Heart left ventricle (tissue), 16 donors: ENCODE measurements at regions of chr13 and their contacts with region 1.

Region 1: GRCh38 chr13:36346222-36347083 is at the start of gene SPART:
- DNase-seq: peak; percentile 91 to 95 (median 94)
- ATAC-seq: peak; percentile 95 to 96 (median 96)
- H3K4me3 ChIP-seq: peak within 1 kb of the TSS; percentile 65 to 91 (median 81)
- H3K27ac ChIP-seq: peak within 1 kb of the TSS; percentile 95 to 99 (median 98)
- H3K4me1 ChIP-seq: peaks cover 0 to 38% (median 19%) of the 10 kb centered on the region in 12 donors
- H3K27me3 ChIP-seq: no peaks in the 10 kb centered on the region
- CTCF ChIP-seq: peak; percentile 95 to 99 (median 98)
- POLR2A ChIP-seq: peak in 1 of 2 donors; percentile 46
- total RNA-seq, gene SPART: 31.0 to 41.5 (median 34.7) TPM

Region 2: DNA sequence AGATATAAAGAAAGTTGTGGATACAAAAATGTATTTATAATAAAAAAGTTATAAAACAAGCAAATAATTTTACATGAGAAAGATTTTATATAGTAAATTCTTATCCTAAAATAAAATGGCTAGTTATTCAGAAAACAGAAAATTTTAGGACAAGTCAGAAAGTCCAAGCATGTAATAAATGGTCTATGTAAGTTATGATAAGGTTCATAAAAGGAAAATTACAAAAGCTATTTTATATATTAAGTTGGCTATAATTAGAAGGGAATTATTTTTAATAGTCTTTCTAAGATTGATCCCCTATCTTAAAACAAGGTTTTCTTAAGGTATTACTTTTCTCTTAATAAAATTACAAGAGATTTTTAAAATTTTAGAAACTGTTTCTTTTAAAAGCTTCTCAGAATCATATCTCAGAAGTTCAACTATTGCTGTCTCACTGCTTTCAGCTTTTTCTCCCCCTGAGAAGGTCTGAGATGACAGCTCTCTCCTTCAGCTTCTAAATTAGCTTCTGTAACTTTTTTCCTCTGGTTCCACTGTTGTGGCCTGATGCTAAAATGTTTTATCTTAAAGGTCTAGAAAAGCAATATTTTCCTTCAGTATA is 57.6 kb before region 1 on chr13:
- intact Hi-C with region 1: loop called in 1 of 10 experiments (anchors 5 kb)
- DNase-seq: no peak
- ATAC-seq: no peak
- H3K4me3 ChIP-seq: no peak overlapping the region
- H3K27ac ChIP-seq: no peak overlapping the region
- H3K4me1 ChIP-seq: no peaks in the 10 kb centered on the region
- H3K27me3 ChIP-seq: no peaks in the 10 kb centered on the region
- CTCF ChIP-seq: no peak
- POLR2A ChIP-seq: no peak

Region 3: GRCh38 chr13:36297366-36298338 is 48.8 kb before region 1 on chr13 and contains the start of gene CCDC169:
- intact Hi-C with region 1: loop called in 1 of 10 experiments (anchors 5 kb)
- DNase-seq: peak; percentile 61 to 87 (median 73)
- ATAC-seq: peak; percentile 50 to 95 (median 94)
- H3K4me3 ChIP-seq: peak within 1 kb of the TSS; percentile 24 to 72 (median 60)
- H3K27ac ChIP-seq: peak within 1 kb of the TSS in 8 of 12 donors; percentile 2 to 85 (median 30)
- H3K4me1 ChIP-seq: peaks cover 0 to 16% (median 8%) of the 10 kb centered on the region in 12 donors
- H3K27me3 ChIP-seq: no peaks in the 10 kb centered on the region
- CTCF ChIP-seq: no peak
- POLR2A ChIP-seq: no peak
- total RNA-seq, gene CCDC169: 0.20 to 5.7 (median 1.4) TPM

Region 4: GRCh38 chr13:36395280-36395679 is 48.8 kb after region 1 on chr13:
- intact Hi-C with region 1: loop called in 3 of 10 experiments (anchors 2 to 5 kb)
- DNase-seq: no peak
- ATAC-seq: peak in 3 of 4 donors; percentile 45 to 63 (median 57)
- H3K4me3 ChIP-seq: no peak overlapping the region
- H3K27ac ChIP-seq: no peak overlapping the region
- H3K4me1 ChIP-seq: no peaks in the 10 kb centered on the region
- H3K27me3 ChIP-seq: peaks cover 0 to under 1% (median 0%) of the 10 kb centered on the region in 9 donors
- CTCF ChIP-seq: peak in 11 of 12 donors; percentile 14 to 59 (median 44)
- POLR2A ChIP-seq: no peak

Region 5: GRCh38 chr13:36530050-36530789 is 183.8 kb after region 1 on chr13:
- intact Hi-C with region 1: no loop called
- DNase-seq: no peak
- ATAC-seq: peak in 1 of 4 donors; percentile 36
- H3K4me3 ChIP-seq: no peak overlapping the region
- H3K27ac ChIP-seq: no peak overlapping the region
- H3K4me1 ChIP-seq: peaks cover 0 to 6% (median 0%) of the 10 kb centered on the region in 12 donors
- H3K27me3 ChIP-seq: no peaks in the 10 kb centered on the region
- CTCF ChIP-seq: no peak
- POLR2A ChIP-seq: no peak